Activated CD8-positive, alpha-beta T cell treated with anti-CD3 and anti-CD28 coated beads, Interleukin-2, amount 10 ng/mL, durations not matched to agents 7 days and 5 days (primary cell): ENCODE measurements at regions of chr3 and their contacts with region 1.

Region 1: DNA sequence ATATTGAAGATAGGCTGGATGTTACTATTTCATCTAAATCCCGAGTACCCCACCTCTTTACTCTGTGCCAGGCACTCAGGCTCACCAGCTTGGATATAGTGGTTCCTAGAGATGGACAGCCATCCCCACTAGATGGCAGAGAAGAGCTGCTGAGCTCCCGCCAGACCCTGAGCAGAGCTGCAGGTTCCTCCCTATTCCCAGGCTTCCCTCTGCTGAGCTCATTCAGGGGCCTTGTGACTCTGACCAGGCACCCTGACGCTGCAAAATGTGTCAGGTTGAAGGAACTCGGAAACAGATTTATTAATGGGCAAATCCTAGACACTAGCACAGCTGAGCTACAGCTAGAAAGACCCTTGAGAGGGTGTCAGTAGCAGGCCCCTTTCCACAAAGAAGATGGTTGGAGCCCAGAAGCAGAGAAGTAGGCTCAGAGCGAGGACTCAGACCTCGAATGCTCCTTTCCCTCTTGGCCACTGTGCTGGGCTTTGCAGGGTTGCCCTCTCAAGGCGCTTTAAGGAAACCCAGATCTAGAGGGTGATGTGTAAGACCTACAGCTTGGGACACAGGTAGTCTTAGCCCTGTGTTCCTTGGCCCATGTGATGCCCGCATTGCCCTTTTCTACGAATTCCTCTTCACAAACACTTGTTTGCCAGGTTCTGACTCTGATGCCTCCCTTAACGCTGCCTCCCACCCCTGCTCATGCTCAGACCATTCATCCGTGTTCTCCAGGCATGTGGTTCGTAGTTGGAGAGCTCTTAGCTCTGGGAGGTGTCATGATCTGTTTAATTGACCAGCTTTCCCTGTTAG is 38.0 kb upstream of the RHO start:
- DNase-seq: peak; percentile 65
- ATAC-seq: peak; percentile 95
- H3K4me3 Mint-ChIP-seq: no peak overlapping the region
- H3K27ac Mint-ChIP-seq: no peak overlapping the region
- H3K4me1 Mint-ChIP-seq: no peaks in the 10 kb centered on the region
- H3K27me3 Mint-ChIP-seq: no peaks in the 10 kb centered on the region

Region 2: DNA sequence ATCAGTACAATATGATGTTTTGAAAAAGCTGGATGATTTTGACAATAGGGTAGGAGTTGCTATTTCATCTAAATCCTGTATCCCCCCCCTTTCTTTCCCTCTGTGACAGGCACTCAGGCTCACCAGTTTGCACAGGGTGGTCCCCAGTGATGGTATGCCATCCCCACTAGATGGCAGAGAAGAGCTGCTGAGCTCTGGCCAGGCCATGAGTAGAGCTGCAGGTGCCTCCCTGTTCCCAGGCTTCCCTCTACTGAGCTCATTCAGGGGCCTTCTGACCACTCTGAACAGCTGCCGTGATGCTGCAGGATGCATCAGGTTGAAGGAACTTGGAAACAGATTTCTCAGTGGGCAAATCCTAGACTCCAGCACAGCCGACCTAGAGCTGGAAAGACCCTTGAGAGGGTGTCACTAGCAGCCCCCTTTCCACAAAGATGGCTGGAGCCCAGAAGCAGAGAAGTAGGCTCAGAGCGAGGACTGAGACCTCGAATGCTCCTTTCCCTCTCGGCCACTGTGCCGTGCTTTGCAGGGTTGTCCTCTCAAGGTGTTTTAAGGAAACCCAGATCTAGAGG is 107.1 kb before region 1 on chr3:
- CTCF ChIA-PET with region 1: interaction called, 10 read pairs
- POLR2A ChIA-PET with region 1: no interaction called
- DNase-seq: peak; percentile 62
- ATAC-seq: peak; percentile 96
- H3K4me3 Mint-ChIP-seq: no peak overlapping the region
- H3K27ac Mint-ChIP-seq: no peak overlapping the region
- H3K4me1 Mint-ChIP-seq: no peaks in the 10 kb centered on the region
- H3K27me3 Mint-ChIP-seq: no peaks in the 10 kb centered on the region

Region 3: DNA sequence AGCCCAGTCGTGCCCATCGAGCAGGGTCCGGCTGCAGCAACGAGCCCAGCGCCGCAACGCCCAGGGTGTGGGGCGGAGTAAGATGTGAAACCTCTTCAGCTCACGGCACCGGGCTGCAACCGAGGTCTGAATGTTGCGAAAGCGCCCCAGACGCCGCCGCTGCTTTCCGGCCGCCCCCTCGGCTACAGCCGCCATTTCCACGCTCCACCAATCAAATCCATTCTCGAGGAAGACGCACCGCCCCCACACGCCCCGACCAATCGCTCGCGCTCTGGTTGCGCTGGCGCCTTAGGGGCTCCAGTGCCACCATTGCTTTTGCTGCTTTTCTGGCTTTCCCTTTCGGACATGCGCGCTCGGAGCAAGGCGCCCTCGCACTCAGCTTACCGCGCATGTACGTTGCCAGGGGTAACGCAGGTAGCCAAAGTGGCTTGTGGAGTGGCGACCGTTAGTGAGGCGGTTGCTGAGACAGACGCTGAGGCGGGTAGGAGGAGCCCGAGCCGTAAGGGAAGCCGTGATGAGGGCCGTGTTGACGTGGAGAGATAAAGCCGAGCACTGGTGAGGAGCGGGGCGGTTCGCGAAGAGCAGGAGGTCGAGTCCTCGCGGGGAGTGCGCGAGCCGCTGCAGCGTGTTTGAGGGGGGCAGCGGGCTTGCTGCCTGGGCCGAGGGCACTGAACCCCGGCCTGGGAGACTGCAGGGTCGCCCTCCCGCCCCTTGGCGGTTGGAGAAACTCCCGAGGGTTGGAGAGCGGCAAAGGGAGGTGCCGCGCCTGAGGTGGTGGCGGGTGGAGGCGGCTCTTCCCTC is 50.4 kb before region 1 on chr3 and contains the starts of genes IFT122 and MBD4:
- CTCF ChIA-PET with region 1: interaction called, 12 read pairs
- POLR2A ChIA-PET with region 1: no interaction called
- DNase-seq: peak; percentile 100
- ATAC-seq: peak; percentile 92
- H3K4me3 Mint-ChIP-seq: peak within 1 kb of the TSS; percentile 98
- H3K27ac Mint-ChIP-seq: peak within 1 kb of the TSS; percentile 91
- H3K4me1 Mint-ChIP-seq: peaks cover 62% of the 10 kb centered on the region
- H3K27me3 Mint-ChIP-seq: no peaks in the 10 kb centered on the region
- total RNA-seq, gene IFT122: 22.3 to 25.6 TPM
- total RNA-seq, gene MBD4: 50.1 to 50.6 TPM

Region 4: GRCh38 chr3:129627429-129628168 is 137.2 kb after region 1 on chr3:
- CTCF ChIA-PET with region 1: interaction called, 12 read pairs
- POLR2A ChIA-PET with region 1: no interaction called
- DNase-seq: peak; percentile 77
- ATAC-seq: peak; percentile 52
- H3K4me3 Mint-ChIP-seq: peak overlapping the region; percentile 75
- H3K27ac Mint-ChIP-seq: peak overlapping the region; percentile 76
- H3K4me1 Mint-ChIP-seq: peaks cover 26% of the 10 kb centered on the region
- H3K27me3 Mint-ChIP-seq: peaks cover 11% of the 10 kb centered on the region

Region 5: DNA sequence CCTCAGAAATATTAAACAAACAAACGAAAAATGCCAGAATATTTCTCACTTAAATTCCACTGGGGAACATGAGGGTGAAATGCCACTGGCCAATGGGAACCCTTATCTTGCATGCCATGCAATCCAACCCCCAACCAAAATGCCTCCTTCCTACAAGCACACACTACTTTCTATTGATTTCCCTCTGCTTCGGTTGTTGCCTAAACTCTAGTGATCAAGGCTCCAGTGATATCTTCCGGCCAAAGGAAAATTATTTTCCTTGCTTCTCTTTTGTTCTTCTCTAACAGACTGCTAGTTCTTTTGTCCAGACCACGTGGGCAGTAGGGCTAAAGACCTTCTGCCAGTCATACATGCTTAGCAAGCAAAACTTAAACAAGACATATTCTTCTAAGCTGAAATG is 287.4 kb after region 1 on chr3:
- CTCF ChIA-PET with region 1: no interaction called
- POLR2A ChIA-PET with region 1: no interaction called
- DNase-seq: no peak
- ATAC-seq: no peak
- H3K4me3 Mint-ChIP-seq: no peak overlapping the region
- H3K27ac Mint-ChIP-seq: no peak overlapping the region
- H3K4me1 Mint-ChIP-seq: no peaks in the 10 kb centered on the region
- H3K27me3 Mint-ChIP-seq: no peaks in the 10 kb centered on the region